MCF 10A (cell line): ENCODE measurements at regions of chr6 and their contacts with region 1.

Region 1: DNA sequence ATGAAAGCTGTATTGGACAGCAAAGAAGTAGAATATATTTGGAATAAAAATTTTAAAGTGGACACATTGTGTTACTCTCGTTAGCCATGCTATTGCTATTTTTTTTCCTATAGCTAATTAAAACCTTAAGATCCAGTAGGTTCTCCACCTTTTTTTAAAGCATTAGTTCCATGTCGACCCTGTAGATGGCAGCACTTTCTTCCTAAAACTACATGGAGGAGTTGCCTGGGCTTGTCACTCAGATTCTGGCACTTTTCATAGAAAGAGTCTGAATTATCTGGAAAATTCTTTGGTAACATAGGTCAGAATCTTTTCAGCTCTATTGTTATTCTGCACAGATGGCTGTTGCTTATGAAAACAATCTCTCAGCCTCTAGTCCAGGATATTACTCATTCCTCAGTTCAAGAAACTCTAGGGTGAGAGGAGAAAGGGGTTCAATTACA is 42.0 kb upstream of the ESR1 start:
- DNase-seq: peak; percentile 85
- H3K4me3 Mint-ChIP-seq: no peak overlapping the region
- H3K27ac Mint-ChIP-seq: peak overlapping the region; percentile 6
- H3K4me1 Mint-ChIP-seq: peaks cover 23% of the 10 kb centered on the region
- H3K27me3 Mint-ChIP-seq: no peaks in the 10 kb centered on the region
- CTCF ChIP-seq: peak; percentile 64

Region 2: GRCh38 chr6:151400454-151400853 is 365.0 kb before region 1 on chr6:
- CTCF ChIA-PET with region 1: no interaction called
- POLR2A ChIA-PET with region 1: no interaction called
- intact Hi-C with region 1: no loop called
- DNase-seq: no peak
- H3K4me3 Mint-ChIP-seq: no peak overlapping the region
- H3K27ac Mint-ChIP-seq: no peak overlapping the region
- H3K4me1 Mint-ChIP-seq: peaks cover 12% of the 10 kb centered on the region
- H3K27me3 Mint-ChIP-seq: no peaks in the 10 kb centered on the region
- CTCF ChIP-seq: no peak

Region 3: GRCh38 chr6:151675746-151676416 is 89.6 kb before region 1 on chr6:
- CTCF ChIA-PET with region 1: interaction called, 7 read pairs
- POLR2A ChIA-PET with region 1: no interaction called
- intact Hi-C with region 1: loop called (anchors 1 kb)
- DNase-seq: peak; percentile 71
- H3K4me3 Mint-ChIP-seq: no peak overlapping the region
- H3K27ac Mint-ChIP-seq: no peak overlapping the region
- H3K4me1 Mint-ChIP-seq: no peaks in the 10 kb centered on the region
- H3K27me3 Mint-ChIP-seq: no peaks in the 10 kb centered on the region
- CTCF ChIP-seq: peak; percentile 89

Region 4: DNA sequence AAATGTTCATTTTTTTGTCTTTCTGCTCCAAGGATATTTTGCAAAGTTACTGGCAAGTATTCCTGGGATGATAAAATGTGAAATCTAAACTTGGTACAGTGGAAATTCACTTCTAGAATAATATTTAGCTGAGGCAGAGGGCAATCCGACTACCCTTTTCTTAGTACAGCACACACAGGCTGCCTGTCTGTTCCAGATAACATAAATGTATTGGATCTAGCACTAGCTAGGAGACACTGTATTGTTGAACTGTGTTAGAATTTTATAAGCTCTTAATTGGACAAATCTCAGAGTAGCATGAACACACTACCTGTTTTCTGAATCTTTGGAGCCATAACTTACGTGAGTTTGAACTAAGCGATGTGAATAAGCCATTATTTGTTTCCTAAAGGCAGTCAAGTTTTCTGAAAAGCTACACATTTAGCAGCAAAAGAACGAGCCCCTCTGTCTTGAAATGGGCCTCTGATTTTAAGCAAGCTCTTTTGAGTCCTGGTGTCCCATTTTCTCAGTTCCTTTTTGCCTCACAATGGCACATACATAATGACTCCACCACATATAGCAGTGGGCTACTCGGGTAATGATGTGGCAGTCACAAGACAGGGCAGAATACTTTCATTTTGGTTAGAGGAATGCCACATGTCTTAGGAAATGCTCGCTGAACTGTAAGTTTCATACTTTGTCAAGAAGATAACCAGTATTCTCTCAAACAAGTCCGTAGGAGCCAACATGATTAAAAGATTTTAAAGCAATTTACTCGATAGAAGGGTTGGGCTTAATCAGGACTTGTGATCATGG is 74.5 kb before region 1 on chr6:
- CTCF ChIA-PET with region 1: interaction called, 12 read pairs
- POLR2A ChIA-PET with region 1: no interaction called
- intact Hi-C with region 1: no loop called
- DNase-seq: no peak
- H3K4me3 Mint-ChIP-seq: no peak overlapping the region
- H3K27ac Mint-ChIP-seq: no peak overlapping the region
- H3K4me1 Mint-ChIP-seq: no peaks in the 10 kb centered on the region
- H3K27me3 Mint-ChIP-seq: no peaks in the 10 kb centered on the region
- CTCF ChIP-seq: no peak

Region 5: GRCh38 chr6:152094992-152095592 is 329.6 kb after region 1 on chr6:
- CTCF ChIA-PET with region 1: interaction called, 13 read pairs
- POLR2A ChIA-PET with region 1: interaction called, 14 read pairs
- intact Hi-C with region 1: no loop called
- DNase-seq: peak; percentile 98
- H3K4me3 Mint-ChIP-seq: peak overlapping the region; percentile 20
- H3K27ac Mint-ChIP-seq: peak overlapping the region; percentile 71
- H3K4me1 Mint-ChIP-seq: peaks cover 61% of the 10 kb centered on the region
- H3K27me3 Mint-ChIP-seq: no peaks in the 10 kb centered on the region
- CTCF ChIP-seq: no peak

Region 6: DNA sequence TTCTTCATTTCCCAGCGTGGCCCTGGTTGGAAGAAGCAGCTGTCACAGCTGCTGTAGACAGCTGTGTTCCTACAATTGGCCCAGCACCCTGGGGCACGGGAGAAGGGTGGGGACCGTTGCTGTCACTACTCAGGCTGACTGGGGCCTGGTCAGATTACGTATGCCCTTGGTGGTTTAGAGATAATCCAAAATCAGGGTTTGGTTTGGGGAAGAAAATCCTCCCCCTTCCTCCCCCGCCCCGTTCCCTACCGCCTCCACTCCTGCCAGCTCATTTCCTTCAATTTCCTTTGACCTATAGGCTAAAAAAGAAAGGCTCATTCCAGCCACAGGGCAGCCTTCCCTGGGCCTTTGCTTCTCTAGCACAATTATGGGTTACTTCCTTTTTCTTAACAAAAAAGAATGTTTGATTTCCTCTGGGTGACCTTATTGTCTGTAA is 334.7 kb after region 1 on chr6:
- CTCF ChIA-PET with region 1: interaction called, 13 read pairs
- POLR2A ChIA-PET with region 1: interaction called, 14 read pairs
- intact Hi-C with region 1: no loop called
- DNase-seq: peak; percentile 56
- H3K4me3 Mint-ChIP-seq: no peak overlapping the region
- H3K27ac Mint-ChIP-seq: no peak overlapping the region
- H3K4me1 Mint-ChIP-seq: peaks cover 29% of the 10 kb centered on the region
- H3K27me3 Mint-ChIP-seq: no peaks in the 10 kb centered on the region
- CTCF ChIP-seq: no peak

Region 7: GRCh38 chr6:152117156-152118133 is 352.0 kb after region 1 on chr6:
- CTCF ChIA-PET with region 1: interaction called, 142 read pairs
- POLR2A ChIA-PET with region 1: interaction called, 3 read pairs
- intact Hi-C with region 1: no loop called
- DNase-seq: no peak
- H3K4me3 Mint-ChIP-seq: no peak overlapping the region
- H3K27ac Mint-ChIP-seq: no peak overlapping the region
- H3K4me1 Mint-ChIP-seq: no peaks in the 10 kb centered on the region
- H3K27me3 Mint-ChIP-seq: no peaks in the 10 kb centered on the region
- CTCF ChIP-seq: no peak